ENCODE measurements at regions of chr11 and their contacts with region 1.

Region 1: DNA sequence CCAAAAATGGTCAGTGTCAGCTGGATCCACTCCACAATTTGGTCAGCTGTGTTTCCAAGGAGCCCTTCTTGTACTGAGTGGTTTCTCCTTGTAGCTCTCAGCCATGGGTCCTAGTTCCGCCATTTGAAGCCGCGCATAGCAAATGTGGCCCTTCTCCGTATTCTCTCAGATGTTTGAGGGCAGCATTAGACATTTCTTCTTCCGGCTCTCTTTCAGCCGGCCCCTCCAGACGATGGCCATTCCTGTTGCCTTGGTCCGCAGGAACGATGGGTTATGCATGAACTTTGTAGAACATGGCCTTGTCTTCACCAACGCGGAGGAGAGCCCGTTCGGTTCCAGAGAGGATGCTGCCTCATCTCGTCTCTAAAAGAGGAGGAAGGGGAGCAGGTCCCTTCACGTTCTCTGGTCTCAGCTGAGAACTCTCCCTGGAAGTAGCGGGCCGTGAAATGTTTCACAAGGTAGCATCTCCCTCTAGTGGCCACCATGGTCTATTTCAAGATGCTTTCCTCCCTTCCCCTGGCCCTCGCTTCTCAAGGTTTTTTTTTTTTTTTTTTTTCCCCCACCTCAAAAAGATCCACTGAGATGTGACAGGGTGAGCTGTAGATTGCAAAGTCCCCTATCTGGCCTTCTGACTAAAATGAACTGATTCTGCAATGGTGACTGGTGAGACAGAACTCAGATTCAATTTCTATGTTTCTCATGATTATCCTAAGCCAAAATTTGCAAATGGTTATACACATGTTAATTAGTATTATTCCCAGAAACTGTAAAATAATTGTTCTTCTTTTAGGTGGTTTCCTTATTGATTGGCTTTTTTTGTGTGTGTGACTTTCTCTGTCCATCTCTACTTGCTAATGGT is 19.8 kb upstream of the PLET1 start:
- DNase-seq: peak; percentile 56 to 60
- ATAC-seq: peak; percentile 86

Region 2: GRCh38 chr11:112113539-112114457 is 166.7 kb before region 1 on chr11:
- intact Hi-C with region 1: loop called in 1 of 2 experiments (anchors 10 kb)
- DNase-seq: no peak
- ATAC-seq: peak; percentile 85

Region 3: DNA sequence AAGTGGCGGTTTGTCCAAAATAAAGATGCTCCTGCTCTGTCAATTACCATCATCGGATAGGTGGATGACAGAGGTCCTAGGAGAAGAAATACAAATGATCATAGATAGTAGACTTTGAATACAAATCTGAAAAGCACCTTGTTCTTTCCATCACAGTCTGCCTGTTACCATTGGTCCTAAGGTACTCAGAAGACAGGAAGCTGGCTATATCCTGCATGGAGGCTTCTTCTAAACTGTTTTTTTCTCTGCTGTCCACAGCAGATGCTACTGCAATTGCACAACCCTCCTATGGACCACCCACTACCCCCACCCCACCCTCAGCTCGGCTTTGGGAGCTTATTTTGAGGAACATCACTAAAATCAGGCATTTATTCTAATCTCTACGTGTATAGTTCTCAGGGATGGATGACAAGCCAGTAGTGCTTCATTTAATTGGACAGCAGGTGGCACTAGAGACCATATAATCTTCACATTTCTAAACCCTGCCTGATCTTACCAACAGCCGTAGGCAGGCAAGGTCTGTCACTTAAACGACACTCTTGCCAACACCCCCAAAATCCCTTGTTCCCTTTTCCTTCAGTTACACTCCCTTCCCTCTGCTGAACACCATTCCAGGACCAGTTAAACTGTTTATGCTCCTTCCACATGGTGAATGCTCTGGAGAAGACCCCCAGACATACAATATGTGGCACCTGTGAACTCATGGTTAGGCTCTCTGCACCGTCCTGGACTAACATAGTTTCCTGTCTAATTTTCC is 60.8 kb before region 1 on chr11:
- intact Hi-C with region 1: loop called (anchors 2 to 5 kb)
- DNase-seq: peak in 1 of 2 donors; percentile 21
- ATAC-seq: peak; percentile 98

Region 4: DNA sequence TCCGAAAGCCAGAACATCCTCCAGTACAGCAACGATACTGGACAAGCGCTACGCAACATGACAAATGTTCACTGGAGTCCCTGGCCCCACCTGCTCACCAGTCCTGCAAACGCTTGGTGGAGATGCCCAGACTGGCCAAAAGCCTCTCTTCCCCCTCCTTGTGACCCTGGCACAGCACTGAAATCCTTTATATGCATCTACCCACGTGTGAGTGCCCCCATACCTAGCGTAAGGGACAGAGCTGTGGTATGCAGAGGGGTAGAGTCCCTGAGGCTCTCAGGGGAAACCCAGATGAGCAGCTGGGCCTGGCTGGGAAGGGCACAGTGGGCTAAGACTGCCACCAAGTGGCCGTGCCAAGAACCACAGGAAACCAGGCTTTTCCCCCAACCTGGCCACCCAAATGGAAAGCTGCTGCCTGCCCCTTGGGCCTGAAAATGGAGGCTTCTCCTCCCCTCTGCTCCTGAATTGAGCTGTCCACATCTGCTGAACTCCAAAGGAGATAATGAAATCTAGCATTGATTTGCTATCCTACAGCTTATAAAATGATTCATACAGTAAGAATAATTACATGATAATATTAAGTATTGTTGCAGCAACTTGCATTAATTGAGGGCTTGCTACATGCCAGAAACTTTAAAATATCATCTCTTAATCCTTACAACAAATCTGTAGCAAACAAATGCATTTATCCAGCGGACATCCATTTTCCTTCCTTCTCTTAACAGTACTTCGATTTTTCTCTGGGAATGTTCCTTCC is 1009.1 kb after region 1 on chr11:
- intact Hi-C with region 1: loop called in 1 of 2 experiments (anchors 10 kb)
- DNase-seq: peak in 1 of 2 donors; percentile 59
- ATAC-seq: peak; percentile 72